CD4-positive, alpha-beta T cell (primary cell): ENCODE measurements at regions of chr19 and their contacts with region 1.

Region 1: DNA sequence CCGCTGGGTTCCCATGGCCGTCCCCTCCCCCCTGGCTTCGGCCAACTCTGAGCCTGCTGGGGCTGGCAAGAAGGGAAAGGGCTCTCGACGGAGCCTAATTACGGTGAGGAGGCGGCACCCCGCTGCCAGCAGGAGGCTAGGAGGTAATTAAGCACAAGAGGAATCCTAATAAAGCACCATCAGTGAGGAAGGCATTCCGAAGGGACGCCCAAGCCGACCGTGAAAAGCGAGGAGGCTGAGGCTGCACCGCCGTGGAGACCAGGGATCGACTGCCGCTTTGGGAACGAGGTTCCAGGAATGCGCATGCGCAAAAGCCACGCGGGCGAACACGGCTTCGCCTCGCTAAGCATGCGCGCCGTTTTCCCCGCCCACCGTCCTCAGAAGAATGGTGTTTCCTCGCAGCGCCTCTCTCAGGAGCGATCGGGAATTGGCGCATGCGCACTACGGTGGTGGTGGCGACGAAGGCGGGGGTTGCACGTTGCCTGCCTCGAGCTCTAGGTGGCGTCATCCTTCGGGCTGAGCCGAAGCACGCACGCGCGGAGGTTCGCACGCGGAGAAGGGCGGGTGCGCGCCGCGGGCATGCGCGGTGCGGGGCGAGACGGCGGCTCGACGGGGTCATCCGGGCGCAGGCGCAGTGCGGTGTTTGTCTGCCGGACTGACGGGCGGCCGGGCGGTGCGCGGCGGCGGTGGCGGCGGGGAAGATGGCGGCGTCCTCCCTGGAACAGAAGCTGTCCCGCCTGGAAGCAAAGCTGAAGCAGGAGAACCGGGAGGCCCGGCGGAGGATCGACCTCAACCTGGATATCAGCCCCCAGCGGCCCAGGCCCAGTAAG is at the start of gene MAP2K7:
- DNase-seq: peak; percentile 100
- ATAC-seq: peak; percentile 87
- H3K4me3 ChIP-seq: peak within 1 kb of the TSS; percentile 85
- H3K4me3 Mint-ChIP-seq: peak within 1 kb of the TSS; percentile 92
- H3K27ac ChIP-seq: peak within 1 kb of the TSS; percentile 68 to 87
- H3K27ac Mint-ChIP-seq: peak within 1 kb of the TSS; percentile 89
- H3K4me1 ChIP-seq: peaks cover 48% of the 10 kb centered on the region
- H3K4me1 Mint-ChIP-seq: peaks cover 26% of the 10 kb centered on the region
- H3K27me3 ChIP-seq: no peaks in the 10 kb centered on the region
- H3K27me3 Mint-ChIP-seq: peaks cover 6% of the 10 kb centered on the region
- CTCF ChIP-seq: peak; percentile 73
- total RNA-seq, gene MAP2K7: 81.7 to 82.3 TPM

Region 2: GRCh38 chr19:7861955-7862951 is 41.2 kb before region 1 on chr19:
- CTCF ChIA-PET with region 1: interaction called, 4 read pairs
- POLR2A ChIA-PET with region 1: interaction called, 12 read pairs
- intact Hi-C with region 1: no loop called
- DNase-seq: peak; percentile 60 to 87 (median 74)
- ATAC-seq: peak; percentile 66
- H3K4me3 ChIP-seq: peak overlapping the region; percentile 50
- H3K4me3 Mint-ChIP-seq: no peak overlapping the region
- H3K27ac ChIP-seq: no peak overlapping the region
- H3K27ac Mint-ChIP-seq: no peak overlapping the region
- H3K4me1 ChIP-seq: peaks cover 44% of the 10 kb centered on the region
- H3K4me1 Mint-ChIP-seq: peaks cover 8% of the 10 kb centered on the region
- H3K27me3 ChIP-seq: peaks cover 29 to 30% of the 10 kb centered on the region in 2 experiments
- H3K27me3 Mint-ChIP-seq: peaks cover 7% of the 10 kb centered on the region
- CTCF ChIP-seq: peak; percentile 16

Region 3: GRCh38 chr19:7868676-7869452 is 34.6 kb before region 1 on chr19:
- CTCF ChIA-PET with region 1: interaction called, 26 read pairs
- POLR2A ChIA-PET with region 1: interaction called, 19 read pairs
- intact Hi-C with region 1: loop called in 1 of 2 experiments (anchors 2 kb)
- DNase-seq: peak; percentile 69 to 96 (median 84)
- ATAC-seq: peak; percentile 69
- H3K4me3 ChIP-seq: peak overlapping the region; percentile 62
- H3K4me3 Mint-ChIP-seq: peak overlapping the region; percentile 87
- H3K27ac ChIP-seq: peak overlapping the region; percentile 67 to 72
- H3K27ac Mint-ChIP-seq: peak overlapping the region; percentile 80
- H3K4me1 ChIP-seq: peaks cover 70% of the 10 kb centered on the region
- H3K4me1 Mint-ChIP-seq: peaks cover 39% of the 10 kb centered on the region
- H3K27me3 ChIP-seq: peaks cover 20 to 21% of the 10 kb centered on the region in 2 experiments
- H3K27me3 Mint-ChIP-seq: peaks cover 33% of the 10 kb centered on the region
- CTCF ChIP-seq: peak; percentile 69